Thyroid gland (tissue), 4 donors: ENCODE measurements at regions of chr22 and their contacts with region 1.

Region 1: GRCh38 chr22:42444077-42444904 is 12.1 kb upstream of the NFAM1 start:
- DNase-seq: peak; percentile 71 to 75
- H3K4me3 ChIP-seq: no peak overlapping the region
- H3K27ac ChIP-seq: peak overlapping the region in 2 of 3 donors; percentile 18 to 57
- H3K4me1 ChIP-seq: peaks cover 4 to 19% of the 10 kb centered on the region in 2 donors
- H3K27me3 ChIP-seq: no peaks in the 10 kb centered on the region
- CTCF ChIP-seq: peak; percentile 23 to 71 (median 58)
- POLR2A ChIP-seq: no peak

Region 2: GRCh38 chr22:41951898-41952474 is 492.3 kb before region 1 on chr22 and contains the start of gene SMIM45:
- intact Hi-C with region 1: no loop called
- DNase-seq: no peak
- H3K4me3 ChIP-seq: no peak within 1 kb of the TSS
- H3K27ac ChIP-seq: no peak within 1 kb of the TSS
- H3K4me1 ChIP-seq: peaks cover 0 to 3% of the 10 kb centered on the region in 2 donors
- H3K27me3 ChIP-seq: no peaks in the 10 kb centered on the region
- CTCF ChIP-seq: no peak
- POLR2A ChIP-seq: no peak

Region 3: GRCh38 chr22:42270512-42271417 is 173.5 kb before region 1 on chr22 and contains the start of gene TCF20:
- intact Hi-C with region 1: loop called (anchors 10 kb)
- DNase-seq: peak; percentile 76 to 79
- H3K4me3 ChIP-seq: peak within 1 kb of the TSS; percentile 56 to 93 (median 84)
- H3K27ac ChIP-seq: peak within 1 kb of the TSS; percentile 65 to 89 (median 83)
- H3K4me1 ChIP-seq: peaks cover 15 to 17% of the 10 kb centered on the region in 2 donors
- H3K27me3 ChIP-seq: no peaks in the 10 kb centered on the region
- CTCF ChIP-seq: no peak
- POLR2A ChIP-seq: peak in 1 of 2 donors; percentile 43
- total RNA-seq, gene TCF20: 47.6 to 82.4 (median 68.7) TPM

Region 4: DNA sequence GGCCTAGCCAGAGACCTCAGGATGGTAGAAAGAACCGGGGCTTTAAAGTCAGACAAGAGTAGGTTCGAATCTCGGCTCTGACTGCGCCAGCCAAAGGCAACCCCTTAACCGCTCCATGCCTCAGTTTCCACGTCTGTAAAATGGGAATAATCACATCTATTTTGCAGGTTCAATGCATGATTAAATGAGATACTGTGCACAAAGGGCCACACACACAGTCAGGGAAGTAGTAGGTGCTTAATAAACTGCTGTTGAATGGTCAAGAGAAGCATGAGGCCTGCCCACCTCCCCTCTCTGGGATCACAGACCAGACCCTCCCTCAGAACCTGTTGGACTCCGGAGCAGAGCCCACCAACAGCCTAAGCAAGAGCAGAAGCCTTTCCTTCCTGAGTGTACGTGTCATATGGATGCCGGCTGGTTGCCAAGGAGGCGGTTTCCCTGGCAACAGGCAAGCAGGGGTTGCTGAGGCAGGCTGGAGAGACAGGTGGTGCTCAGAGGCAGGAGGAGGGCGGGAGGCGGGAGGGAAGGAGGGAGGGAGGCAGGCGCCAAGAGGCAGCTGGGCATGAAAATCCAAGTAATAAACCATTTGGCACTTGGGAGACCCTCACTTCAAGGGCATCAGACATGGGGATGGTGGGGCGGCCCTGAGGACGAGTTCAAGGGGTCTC is 56.0 kb before region 1 on chr22:
- intact Hi-C with region 1: no loop called
- DNase-seq: no peak
- H3K4me3 ChIP-seq: no peak overlapping the region
- H3K27ac ChIP-seq: no peak overlapping the region
- H3K4me1 ChIP-seq: no peaks in the 10 kb centered on the region
- H3K27me3 ChIP-seq: no peaks in the 10 kb centered on the region
- CTCF ChIP-seq: no peak
- POLR2A ChIP-seq: no peak

Region 5: DNA sequence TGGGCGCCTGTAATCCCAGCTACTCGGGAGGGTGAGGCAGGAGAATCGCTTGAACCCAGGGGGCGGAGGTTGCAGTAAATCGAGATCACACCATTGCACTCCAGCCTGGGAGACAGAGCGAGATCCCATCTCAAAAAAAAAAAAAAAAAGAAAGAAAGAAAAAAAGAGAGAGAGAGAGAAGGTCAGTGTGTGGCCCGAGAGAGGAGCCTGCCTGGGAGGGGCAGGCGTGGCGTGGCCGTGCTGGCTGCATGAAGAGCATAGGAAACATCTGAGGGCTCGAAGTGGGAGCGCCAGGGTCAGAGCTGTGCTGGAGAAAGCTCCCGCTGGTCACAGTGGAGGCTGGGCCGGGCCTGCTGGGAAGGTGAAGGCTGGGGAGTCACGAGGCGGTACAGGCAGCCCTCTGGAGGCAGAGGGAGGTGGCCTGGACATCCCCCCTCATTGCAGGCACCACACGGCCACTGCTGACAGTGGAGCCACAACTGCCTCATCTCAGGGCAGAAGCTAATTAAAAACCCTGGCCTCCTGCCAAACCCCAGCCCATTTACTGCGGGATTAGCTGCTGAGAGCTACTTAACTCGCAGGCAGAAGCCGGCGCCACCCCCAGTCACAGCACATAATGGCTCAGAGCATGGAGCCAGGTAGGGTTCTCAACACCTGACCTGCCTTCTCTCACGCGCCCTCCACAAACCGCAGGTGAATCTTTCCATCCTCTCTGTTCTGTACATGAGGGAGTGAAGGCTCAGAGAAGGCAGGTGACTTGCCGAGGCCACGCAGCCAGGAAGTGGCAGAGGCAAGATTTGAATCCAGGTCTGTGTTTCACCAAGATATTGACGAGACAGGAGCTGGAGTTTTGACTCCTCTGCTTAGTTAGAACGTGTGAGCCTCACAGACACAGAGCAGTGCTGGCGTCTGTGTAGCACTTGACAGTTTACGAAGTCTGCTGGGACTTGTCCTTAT is 44.7 kb before region 1 on chr22:
- intact Hi-C with region 1: no loop called
- DNase-seq: peak; percentile 83 to 86
- H3K4me3 ChIP-seq: no peak overlapping the region
- H3K27ac ChIP-seq: peak overlapping the region; percentile 48 to 87 (median 61)
- H3K4me1 ChIP-seq: peaks cover 25 to 39% of the 10 kb centered on the region in 2 donors
- H3K27me3 ChIP-seq: no peaks in the 10 kb centered on the region
- CTCF ChIP-seq: no peak
- POLR2A ChIP-seq: no peak